Prostate gland (tissue), 2 donors: ENCODE measurements at regions of chr1 and their contacts with region 1.

Region 1: GRCh38 chr1:212477014-212477679 is 44.4 kb downstream of the NENF start:
- DNase-seq: peak; percentile 79
- H3K4me3 ChIP-seq: no peak overlapping the region
- H3K27ac ChIP-seq: no peak overlapping the region
- H3K4me1 ChIP-seq: no peaks in the 10 kb centered on the region
- H3K27me3 ChIP-seq: no peaks in the 10 kb centered on the region
- CTCF ChIP-seq: peak; percentile 64 to 88 (median 74)
- POLR2A ChIP-seq: no peak

Region 2: GRCh38 chr1:212608209-212608955 is 131.2 kb after region 1 on chr1 and contains the start of gene ATF3:
- intact Hi-C with region 1: loop called (anchors 5 kb)
- DNase-seq: peak; percentile 100
- H3K4me3 ChIP-seq: peak within 1 kb of the TSS; percentile 49 to 72
- H3K27ac ChIP-seq: peak within 1 kb of the TSS; percentile 97 to 99
- H3K4me1 ChIP-seq: peaks cover 4% of the 10 kb centered on the region
- H3K27me3 ChIP-seq: no peaks in the 10 kb centered on the region
- CTCF ChIP-seq: peak in 1 of 4 experiments; percentile 3
- POLR2A ChIP-seq: peak; percentile 96
- total RNA-seq, gene ATF3: 6.0 to 14.8 TPM

Region 3: GRCh38 chr1:212629450-212630157 is 152.5 kb after region 1 on chr1:
- intact Hi-C with region 1: loop called (anchors 5 kb)
- DNase-seq: no peak
- H3K4me3 ChIP-seq: no peak overlapping the region
- H3K27ac ChIP-seq: no peak overlapping the region
- H3K4me1 ChIP-seq: no peaks in the 10 kb centered on the region
- H3K27me3 ChIP-seq: no peaks in the 10 kb centered on the region
- CTCF ChIP-seq: no peak
- POLR2A ChIP-seq: no peak

Region 4: GRCh38 chr1:212782422-212783154 is 305.4 kb after region 1 on chr1:
- intact Hi-C with region 1: loop called (anchors 5 kb)
- DNase-seq: no peak
- H3K4me3 ChIP-seq: no peak overlapping the region
- H3K27ac ChIP-seq: no peak overlapping the region
- H3K4me1 ChIP-seq: no peaks in the 10 kb centered on the region
- H3K27me3 ChIP-seq: no peaks in the 10 kb centered on the region
- CTCF ChIP-seq: peak in 3 of 4 experiments; percentile 62 to 76 (median 72)
- POLR2A ChIP-seq: no peak